PC-3 (cell line): ENCODE measurements at regions of chr10 and their contacts with region 1.

Region 1: DNA sequence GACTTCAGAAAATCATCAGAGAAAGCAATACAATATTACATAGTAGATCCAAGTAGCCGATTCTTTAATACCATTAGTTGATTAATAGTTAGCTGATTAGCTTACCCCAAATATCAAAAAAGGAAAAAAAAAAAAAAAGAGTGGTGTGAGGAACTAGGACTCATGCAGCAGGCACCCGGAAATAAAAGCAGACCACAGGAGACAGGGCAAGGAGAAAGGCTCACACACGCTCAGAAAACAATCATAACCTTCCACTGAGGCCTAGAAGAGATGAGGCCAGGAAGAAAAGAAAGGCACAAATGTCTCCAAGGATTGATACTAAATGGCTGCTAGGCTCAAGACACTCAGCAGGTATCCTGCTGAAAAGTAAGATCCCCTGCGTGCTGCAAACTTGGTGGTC is 25.9 kb downstream of the TRDMT1 start:
- DNase-seq: no peak
- ATAC-seq: no peak
- H3K4me3 ChIP-seq: no peak overlapping the region
- H3K27ac ChIP-seq: no peak overlapping the region
- H3K4me1 ChIP-seq: no peaks in the 10 kb centered on the region
- H3K27me3 ChIP-seq: no peaks in the 10 kb centered on the region
- CTCF ChIP-seq: no peak

Region 2: GRCh38 chr10:16856567-16856966 is 319.0 kb before region 1 on chr10:
- CTCF ChIA-PET with region 1: no interaction called
- POLR2A ChIA-PET with region 1: interaction called, 12 read pairs
- intact Hi-C with region 1: no loop called
- DNase-seq: no peak
- ATAC-seq: peak; percentile 29; the same call in 1 of the 2 replicates
- H3K4me3 ChIP-seq: no peak overlapping the region
- H3K27ac ChIP-seq: 0 out of 2 replicates have a peak overlapping the region, but pooled peaks have one; percentile 17
- H3K4me1 ChIP-seq: peaks cover 19% of the 10 kb centered on the region
- H3K27me3 ChIP-seq: no peaks in the 10 kb centered on the region
- CTCF ChIP-seq: no peak

Region 3: DNA sequence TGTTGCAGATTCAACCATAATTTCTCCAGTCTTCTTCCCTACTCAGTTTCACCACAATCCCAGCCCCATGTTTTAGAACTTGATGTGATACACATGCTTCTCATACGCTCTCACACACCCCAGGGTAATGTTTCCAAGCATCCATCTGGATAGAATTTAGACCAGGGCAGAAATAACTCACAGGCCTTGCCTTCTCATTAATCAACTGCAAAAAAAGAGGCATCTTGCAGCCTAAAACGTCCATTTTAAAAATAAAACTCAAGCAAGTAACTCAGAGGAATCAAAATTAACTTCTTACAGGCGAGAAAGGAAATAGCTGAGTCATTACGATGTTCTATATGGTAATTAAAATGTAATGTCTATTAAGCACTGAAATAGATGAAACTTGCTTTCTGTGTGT is 231.1 kb before region 1 on chr10:
- CTCF ChIA-PET with region 1: no interaction called
- POLR2A ChIA-PET with region 1: no interaction called
- intact Hi-C with region 1: loop called (anchors 1 kb)
- DNase-seq: no peak
- ATAC-seq: no peak
- H3K4me3 ChIP-seq: no peak overlapping the region
- H3K27ac ChIP-seq: no peak overlapping the region
- H3K4me1 ChIP-seq: no peaks in the 10 kb centered on the region
- H3K27me3 ChIP-seq: no peaks in the 10 kb centered on the region
- CTCF ChIP-seq: no peak

Region 4: DNA sequence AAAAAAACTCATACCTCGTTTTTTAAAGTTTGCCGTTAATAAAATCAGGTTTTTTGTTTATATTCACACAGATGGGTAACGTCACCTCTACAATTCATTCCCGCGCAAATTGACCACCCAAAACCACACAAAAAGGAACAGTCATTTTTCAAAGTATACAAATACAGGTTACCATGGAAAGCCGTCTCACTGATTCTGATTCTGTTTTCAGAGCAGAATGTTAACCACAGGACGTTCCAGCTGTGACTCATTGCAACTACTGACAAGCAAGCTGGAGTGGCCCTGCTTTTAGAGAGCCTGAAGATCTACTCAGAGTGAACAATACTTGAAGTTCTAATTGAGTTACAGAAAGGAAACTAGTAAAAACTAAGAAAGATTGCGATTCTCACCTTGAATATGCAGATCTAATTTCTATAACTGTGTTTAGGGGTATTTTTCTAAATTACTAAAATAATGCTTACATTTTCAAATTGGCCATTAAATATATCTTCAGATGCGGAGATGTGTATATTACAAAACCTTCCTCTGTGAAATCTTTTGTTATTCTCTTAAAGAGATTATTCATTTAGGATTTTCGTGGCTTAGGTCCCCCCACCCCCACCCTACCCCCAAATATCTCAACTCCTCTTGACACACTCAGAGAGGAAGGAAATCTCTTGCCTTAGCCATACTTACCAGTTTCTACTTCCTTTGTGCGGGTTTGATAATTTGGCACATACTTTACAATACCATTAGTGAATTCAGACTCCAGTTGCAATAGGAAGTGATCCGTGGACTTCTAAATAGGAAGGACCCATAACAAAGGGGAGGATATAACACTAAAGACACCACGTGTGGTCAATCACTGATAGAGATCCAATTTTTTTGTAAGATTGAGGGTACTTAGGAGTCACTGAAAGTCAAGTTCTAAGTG is 151.9 kb before region 1 on chr10:
- CTCF ChIA-PET with region 1: no interaction called
- POLR2A ChIA-PET with region 1: no interaction called
- intact Hi-C with region 1: loop called (anchors 10 kb)
- DNase-seq: peak; percentile 88
- ATAC-seq: peak; percentile 85
- H3K4me3 ChIP-seq: no peak overlapping the region
- H3K27ac ChIP-seq: peak overlapping the region; percentile 92
- H3K4me1 ChIP-seq: peaks cover 41% of the 10 kb centered on the region
- H3K27me3 ChIP-seq: no peaks in the 10 kb centered on the region
- CTCF ChIP-seq: no peak

Region 5: GRCh38 chr10:17196045-17196444 is 20.5 kb after region 1 on chr10:
- CTCF ChIA-PET with region 1: no interaction called
- POLR2A ChIA-PET with region 1: no interaction called
- intact Hi-C with region 1: no loop called
- DNase-seq: no peak
- ATAC-seq: no peak
- H3K4me3 ChIP-seq: no peak overlapping the region
- H3K27ac ChIP-seq: no peak overlapping the region
- H3K4me1 ChIP-seq: peaks cover 14% of the 10 kb centered on the region
- H3K27me3 ChIP-seq: no peaks in the 10 kb centered on the region
- CTCF ChIP-seq: no peak